ENCODE measurements at regions of chr13 and their contacts with region 1.

Region 1: DNA sequence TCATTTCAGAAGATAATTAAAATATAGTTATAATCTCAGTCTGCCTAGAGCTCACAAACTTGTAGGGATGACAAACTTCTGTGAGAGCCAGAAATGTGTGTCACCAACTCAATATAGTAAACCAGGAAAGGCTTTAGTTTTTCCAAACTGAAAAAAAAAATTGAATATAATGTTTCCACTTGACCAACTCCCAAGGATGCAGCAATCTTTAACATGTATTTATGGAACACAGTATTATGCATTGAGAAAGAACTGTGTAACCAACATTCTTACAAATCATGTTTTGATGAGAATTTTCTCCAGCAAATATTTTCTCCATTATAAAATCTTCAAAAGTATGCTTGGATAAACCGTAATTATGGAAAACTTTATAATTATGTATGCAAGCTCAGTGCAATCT is 50.1 kb upstream of the KLF12 start:
- DNase-seq: no peak
- ATAC-seq: no peak
- H3K4me3 ChIP-seq: no peak overlapping the region
- H3K27ac ChIP-seq: no peak overlapping the region
- H3K4me1 ChIP-seq: peaks cover 6% of the 10 kb centered on the region
- H3K27me3 ChIP-seq: no peaks in the 10 kb centered on the region
- CTCF ChIP-seq: no peak

Region 2: GRCh38 chr13:73898276-73898675 is 286.0 kb before region 1 on chr13:
- CTCF ChIA-PET with region 1: no interaction called
- POLR2A ChIA-PET with region 1: no interaction called
- intact Hi-C with region 1: no loop called
- DNase-seq: peak; percentile 36
- ATAC-seq: peak; percentile 71; the same call in 1 of the 2 replicates
- H3K4me3 ChIP-seq: no peak overlapping the region
- H3K27ac ChIP-seq: no peak overlapping the region
- H3K4me1 ChIP-seq: peaks cover 7% of the 10 kb centered on the region; the same call in 1 of the 2 replicates
- H3K27me3 ChIP-seq: no peaks in the 10 kb centered on the region
- CTCF ChIP-seq: no peak

Region 3: GRCh38 chr13:74145249-74145975 is 38.9 kb before region 1 on chr13:
- CTCF ChIA-PET with region 1: no interaction called
- POLR2A ChIA-PET with region 1: no interaction called
- intact Hi-C with region 1: loop called (anchors 1 kb)
- DNase-seq: no peak
- ATAC-seq: no peak
- H3K4me3 ChIP-seq: no peak overlapping the region
- H3K27ac ChIP-seq: no peak overlapping the region
- H3K4me1 ChIP-seq: no peaks in the 10 kb centered on the region
- H3K27me3 ChIP-seq: no peaks in the 10 kb centered on the region
- CTCF ChIP-seq: no peak

Region 4: GRCh38 chr13:74168263-74168675 is 16.0 kb before region 1 on chr13:
- CTCF ChIA-PET with region 1: no interaction called
- POLR2A ChIA-PET with region 1: interaction called, 12 read pairs
- intact Hi-C with region 1: no loop called
- DNase-seq: no peak
- ATAC-seq: no peak
- H3K4me3 ChIP-seq: no peak overlapping the region
- H3K27ac ChIP-seq: no peak overlapping the region
- H3K4me1 ChIP-seq: no peaks in the 10 kb centered on the region
- H3K27me3 ChIP-seq: no peaks in the 10 kb centered on the region
- CTCF ChIP-seq: no peak